ENCODE measurements at regions of chr17 and their contacts with region 1.

Region 1: GRCh38 chr17:76304226-76305134 is 3.6 kb downstream of the QRICH2 start:
- DNase-seq: no peak
- H3K4me3 ChIP-seq: no peak overlapping the region
- H3K27ac ChIP-seq: no peak overlapping the region
- H3K4me1 ChIP-seq: peaks cover 5% of the 10 kb centered on the region
- CTCF ChIP-seq: no peak

Region 2: GRCh38 chr17:76337413-76337777 is 32.9 kb after region 1 on chr17:
- CTCF ChIA-PET with region 1: no interaction called
- POLR2A ChIA-PET with region 1: no interaction called
- intact Hi-C with region 1: no loop called
- DNase-seq: no peak
- H3K4me3 ChIP-seq: no peak overlapping the region
- H3K27ac ChIP-seq: no peak overlapping the region
- H3K4me1 ChIP-seq: no peaks in the 10 kb centered on the region
- CTCF ChIP-seq: no peak

Region 3: GRCh38 chr17:76397687-76398487 is 93.4 kb after region 1 on chr17:
- CTCF ChIA-PET with region 1: interaction called, 7 read pairs
- POLR2A ChIA-PET with region 1: interaction called, 4 read pairs
- intact Hi-C with region 1: loop called (anchors 1 kb)
- DNase-seq: peak; percentile 88
- H3K4me3 ChIP-seq: no peak overlapping the region
- H3K27ac ChIP-seq: no peak overlapping the region
- H3K4me1 ChIP-seq: no peaks in the 10 kb centered on the region
- CTCF ChIP-seq: peak; percentile 100

Region 4: DNA sequence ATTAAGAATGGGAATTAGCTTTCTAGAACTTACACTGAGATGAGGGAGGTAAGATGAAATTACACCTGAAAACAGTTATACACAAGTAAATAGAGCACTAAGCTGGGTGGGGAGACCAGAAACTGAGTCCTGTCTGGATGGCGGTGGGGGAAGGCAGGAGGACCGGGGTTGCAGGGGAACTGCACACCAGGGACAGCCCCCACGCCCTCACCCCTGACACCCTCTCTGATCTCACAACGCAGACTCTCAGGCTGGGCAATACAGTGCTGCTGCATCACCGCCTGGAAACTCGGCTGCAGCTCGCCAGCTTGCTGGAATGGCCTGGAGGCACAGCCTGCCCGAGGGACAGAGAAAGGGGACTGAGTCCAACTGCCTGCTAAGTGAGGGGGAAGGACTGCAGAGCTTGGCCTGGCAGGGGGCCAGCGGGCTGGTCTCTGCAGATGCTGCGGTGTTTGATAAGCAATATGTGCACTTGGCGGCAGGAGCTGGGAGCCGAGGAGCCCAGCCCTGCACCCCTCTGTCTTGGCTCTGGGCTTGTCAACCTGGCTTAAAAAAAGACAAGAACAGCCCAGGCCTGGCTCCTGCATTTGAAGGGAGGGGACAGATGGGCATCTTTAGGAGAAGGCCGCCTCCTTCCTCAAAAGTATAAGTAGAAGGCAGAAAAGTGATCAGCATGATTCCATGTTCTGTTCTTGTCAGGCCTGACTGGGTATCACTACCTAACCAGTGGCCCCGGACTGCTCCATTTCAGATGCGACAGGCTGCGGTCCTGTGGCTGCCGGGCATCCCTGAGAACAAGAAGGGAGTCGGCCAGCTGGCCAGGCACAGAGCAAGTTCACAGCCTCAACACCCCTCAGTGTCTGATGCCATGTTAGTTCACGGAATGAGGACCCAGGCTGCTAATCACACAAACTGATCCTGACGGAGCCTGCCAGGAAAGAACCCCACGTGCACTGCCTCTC is 110.1 kb after region 1 on chr17:
- CTCF ChIA-PET with region 1: no interaction called
- POLR2A ChIA-PET with region 1: no interaction called
- intact Hi-C with region 1: no loop called
- DNase-seq: no peak
- H3K4me3 ChIP-seq: no peak overlapping the region
- H3K27ac ChIP-seq: no peak overlapping the region
- H3K4me1 ChIP-seq: peaks cover 56% of the 10 kb centered on the region
- CTCF ChIP-seq: no peak